Activated CD4-positive, alpha-beta T cell treated with anti-CD3 and anti-CD28 coated beads for 36 hours (primary cell): ENCODE measurements at regions of chrX and their contacts with region 1.

Region 1: GRCh38 chrX:20530406-20530921 is 263.8 kb upstream of the RPS6KA3 start:
- DNase-seq: peak; percentile 68
- ATAC-seq: peak; percentile 39
- H3K4me3 Mint-ChIP-seq: no peak overlapping the region
- H3K27ac Mint-ChIP-seq: no peak overlapping the region
- H3K4me1 Mint-ChIP-seq: peaks cover 2% of the 10 kb centered on the region
- H3K27me3 Mint-ChIP-seq: peaks cover 18% of the 10 kb centered on the region

Region 2: GRCh38 chrX:20740443-20740842 is 210.0 kb after region 1 on chrX:
- CTCF ChIA-PET with region 1: no interaction called
- POLR2A ChIA-PET with region 1: no interaction called
- intact Hi-C with region 1: loop called in 1 of 2 experiments (anchors 2 kb)
- DNase-seq: peak; percentile 5
- ATAC-seq: no peak
- H3K4me3 Mint-ChIP-seq: no peak overlapping the region
- H3K27ac Mint-ChIP-seq: no peak overlapping the region
- H3K4me1 Mint-ChIP-seq: peaks cover 5% of the 10 kb centered on the region
- H3K27me3 Mint-ChIP-seq: peaks cover 5% of the 10 kb centered on the region

Region 3: GRCh38 chrX:21479695-21480270 is 949.3 kb after region 1 on chrX:
- CTCF ChIA-PET with region 1: interaction called, 4 read pairs
- POLR2A ChIA-PET with region 1: no interaction called
- intact Hi-C with region 1: loop called (anchors 1 to 5 kb)
- DNase-seq: no peak
- ATAC-seq: peak; percentile 68
- H3K4me3 Mint-ChIP-seq: no peak overlapping the region
- H3K27ac Mint-ChIP-seq: no peak overlapping the region
- H3K4me1 Mint-ChIP-seq: no peaks in the 10 kb centered on the region
- H3K27me3 Mint-ChIP-seq: no peaks in the 10 kb centered on the region

Region 4: DNA sequence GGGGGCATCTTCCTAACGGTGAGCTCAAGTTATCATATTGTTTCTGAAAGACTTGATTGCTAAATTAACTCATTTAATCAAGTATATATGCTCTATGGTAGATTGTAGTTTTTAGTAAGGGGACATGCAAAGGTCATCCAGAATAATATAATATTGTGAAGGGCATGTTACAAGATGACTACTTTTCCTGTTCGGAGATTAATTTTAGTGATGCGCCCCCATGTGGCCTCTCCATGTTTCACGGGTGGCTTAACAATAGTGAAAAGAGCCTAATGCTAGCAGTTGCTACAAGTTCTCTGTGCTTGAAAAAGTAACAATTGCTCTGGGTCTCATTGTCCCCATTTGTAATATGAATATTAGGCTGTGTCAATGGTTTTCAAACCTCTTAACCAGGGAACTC is 1215.3 kb after region 1 on chrX:
- CTCF ChIA-PET with region 1: interaction called, 3 read pairs
- POLR2A ChIA-PET with region 1: no interaction called
- intact Hi-C with region 1: loop called (anchors 2 kb)
- DNase-seq: peak; percentile 59
- ATAC-seq: no peak
- H3K4me3 Mint-ChIP-seq: no peak overlapping the region
- H3K27ac Mint-ChIP-seq: no peak overlapping the region
- H3K4me1 Mint-ChIP-seq: no peaks in the 10 kb centered on the region
- H3K27me3 Mint-ChIP-seq: peaks cover 2% of the 10 kb centered on the region

Region 5: GRCh38 chrX:21940356-21940829 is 1409.9 kb after region 1 on chrX and contains the start of gene SMS:
- CTCF ChIA-PET with region 1: no interaction called
- POLR2A ChIA-PET with region 1: no interaction called
- intact Hi-C with region 1: loop called in 1 of 2 experiments (anchors 10 kb)
- DNase-seq: peak; percentile 78
- ATAC-seq: peak; percentile 65
- H3K4me3 Mint-ChIP-seq: peak within 1 kb of the TSS; percentile 83
- H3K27ac Mint-ChIP-seq: peak within 1 kb of the TSS; percentile 91
- H3K4me1 Mint-ChIP-seq: peaks cover 32% of the 10 kb centered on the region
- H3K27me3 Mint-ChIP-seq: no peaks in the 10 kb centered on the region
- total RNA-seq, gene SMS: 100 to 124 TPM